OCI-LY7 (cell line): ENCODE measurements at regions of chr3 and their contacts with region 1.

Region 1: DNA sequence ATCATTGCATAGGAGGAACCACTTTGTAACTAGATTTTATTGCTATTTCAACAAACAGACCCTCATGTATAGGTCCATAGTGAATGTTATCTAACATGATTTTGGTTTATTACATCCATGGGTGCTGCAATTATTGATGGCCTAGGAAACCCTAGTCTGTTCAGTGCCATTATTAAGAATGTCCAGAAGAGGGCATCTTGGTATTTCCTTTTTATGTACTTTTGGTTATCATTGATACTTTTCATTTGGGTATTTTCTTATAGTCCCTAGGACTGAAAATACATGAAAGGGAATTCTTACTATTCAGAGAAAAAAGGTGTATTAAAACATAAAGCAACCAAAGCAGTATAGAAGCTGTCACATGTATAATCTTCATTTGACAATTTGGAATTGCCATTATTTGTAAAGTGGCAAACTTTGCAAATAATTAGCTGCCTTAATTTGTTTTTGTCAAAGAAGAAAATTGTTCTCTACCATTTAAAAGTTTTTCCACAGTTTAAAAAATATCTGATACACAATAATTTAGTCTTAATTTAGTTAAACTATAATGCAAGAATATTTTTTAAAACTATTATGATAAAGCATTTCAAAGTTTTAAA is 48.7 kb downstream of the CNOT10 start:
- DNase-seq: peak; percentile 44
- H3K4me3 ChIP-seq: no peak overlapping the region
- H3K27ac ChIP-seq: no peak overlapping the region
- H3K4me1 ChIP-seq: no peaks in the 10 kb centered on the region
- CTCF ChIP-seq: peak; percentile 82

Region 2: GRCh38 chr3:32781210-32781968 is 47.7 kb after region 1 on chr3:
- CTCF ChIA-PET with region 1: no interaction called
- POLR2A ChIA-PET with region 1: no interaction called
- intact Hi-C with region 1: loop called (anchors 1 kb)
- DNase-seq: peak; percentile 80
- H3K4me3 ChIP-seq: peak overlapping the region; percentile 67
- H3K27ac ChIP-seq: no peak overlapping the region
- H3K4me1 ChIP-seq: no peaks in the 10 kb centered on the region
- CTCF ChIP-seq: peak; percentile 87

Region 3: DNA sequence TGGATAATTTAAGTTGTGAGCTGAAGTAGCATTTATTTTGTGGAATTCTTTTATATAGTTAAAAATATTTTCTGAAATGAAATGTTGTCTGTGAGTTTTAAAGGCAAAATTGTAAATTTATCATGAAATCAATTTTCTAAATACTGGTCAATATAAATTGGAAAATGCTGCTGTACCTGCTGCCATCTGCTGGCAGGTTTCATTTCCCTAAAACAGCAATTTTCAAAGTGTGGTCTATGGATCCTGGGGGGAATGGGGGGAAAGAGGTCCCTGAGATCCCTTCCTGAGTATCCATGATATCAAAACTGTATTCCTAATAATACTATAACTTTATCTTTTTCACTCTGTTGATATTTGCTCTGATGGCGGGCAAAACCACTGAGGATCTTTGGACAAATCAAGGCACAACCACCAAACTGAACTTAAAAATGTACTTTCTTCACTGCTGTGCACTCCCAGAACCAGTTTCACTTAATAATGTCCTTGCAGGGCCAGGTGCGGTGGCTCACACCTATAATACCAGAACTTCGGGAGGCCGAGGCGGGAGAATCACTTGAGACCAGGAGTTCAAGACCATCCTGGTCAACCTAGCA is 200.5 kb after region 1 on chr3:
- CTCF ChIA-PET with region 1: no interaction called
- POLR2A ChIA-PET with region 1: no interaction called
- intact Hi-C with region 1: loop called (anchors 1 kb)
- DNase-seq: peak; percentile 20
- H3K4me3 ChIP-seq: no peak overlapping the region
- H3K27ac ChIP-seq: no peak overlapping the region
- H3K4me1 ChIP-seq: no peaks in the 10 kb centered on the region
- CTCF ChIP-seq: peak; percentile 87

Region 4: GRCh38 chr3:33074217-33075067 is 340.7 kb after region 1 on chr3:
- CTCF ChIA-PET with region 1: no interaction called
- POLR2A ChIA-PET with region 1: no interaction called
- intact Hi-C with region 1: loop called (anchors 10 kb)
- DNase-seq: peak; percentile 80
- H3K4me3 ChIP-seq: no peak overlapping the region
- H3K27ac ChIP-seq: no peak overlapping the region
- H3K4me1 ChIP-seq: no peaks in the 10 kb centered on the region
- CTCF ChIP-seq: peak; percentile 98